ENCODE measurements at regions of chr3 and their contacts with region 1.

Region 1: DNA sequence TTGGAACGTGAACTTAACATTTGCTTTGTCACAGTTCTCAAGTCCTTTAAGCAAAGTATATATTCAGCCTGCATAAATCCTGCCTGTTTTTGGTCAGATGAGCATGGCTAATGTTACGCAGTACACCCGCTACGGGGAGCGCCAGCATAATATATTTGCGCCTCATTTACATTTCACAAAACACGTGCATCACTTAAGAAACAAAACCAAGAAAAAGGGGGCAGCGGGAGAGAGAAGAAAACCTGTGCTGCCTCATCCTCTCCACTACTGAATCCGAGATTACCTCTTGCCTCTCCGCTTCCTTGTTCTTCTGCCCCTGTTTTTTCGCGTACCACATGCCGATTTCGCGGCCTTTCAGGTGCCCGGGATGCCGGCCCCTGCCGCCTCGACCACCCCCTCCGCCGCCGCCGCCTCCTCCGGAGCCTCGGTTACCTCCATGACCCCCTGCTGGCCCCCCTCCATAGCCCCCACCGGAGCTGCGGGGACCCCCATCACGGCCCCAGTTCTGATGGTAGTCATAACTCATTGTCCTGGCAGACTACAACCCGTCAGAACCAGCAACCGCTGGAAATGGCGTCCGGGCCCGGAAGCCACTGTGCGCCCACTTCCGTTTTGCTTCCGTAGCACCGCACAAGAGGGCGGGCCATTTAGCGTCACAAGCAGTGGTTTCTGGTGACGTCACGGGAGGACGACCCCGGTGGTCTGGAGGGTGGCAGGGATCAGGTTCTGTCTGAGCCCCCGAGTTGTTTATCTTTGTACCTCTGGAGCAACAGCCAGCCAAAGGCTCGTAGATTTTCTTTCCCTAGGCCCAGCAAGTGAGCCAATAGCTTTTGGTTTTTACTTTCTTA is at the start of gene DHX36:
- DNase-seq: peak; percentile 84 to 91
- H3K4me3 ChIP-seq: peak within 1 kb of the TSS; percentile 88
- H3K4me1 ChIP-seq: peaks cover 11% of the 10 kb centered on the region
- H3K27me3 ChIP-seq: no peaks in the 10 kb centered on the region

Region 2: GRCh38 chr3:154684021-154684420 is 359.9 kb after region 1 on chr3:
- in situ Hi-C with region 1: no loop called
- DNase-seq: peak in 1 of 2 experiments; percentile 26
- H3K4me3 ChIP-seq: no peak overlapping the region
- H3K4me1 ChIP-seq: no peaks in the 10 kb centered on the region
- H3K27me3 ChIP-seq: no peaks in the 10 kb centered on the region

Region 3: DNA sequence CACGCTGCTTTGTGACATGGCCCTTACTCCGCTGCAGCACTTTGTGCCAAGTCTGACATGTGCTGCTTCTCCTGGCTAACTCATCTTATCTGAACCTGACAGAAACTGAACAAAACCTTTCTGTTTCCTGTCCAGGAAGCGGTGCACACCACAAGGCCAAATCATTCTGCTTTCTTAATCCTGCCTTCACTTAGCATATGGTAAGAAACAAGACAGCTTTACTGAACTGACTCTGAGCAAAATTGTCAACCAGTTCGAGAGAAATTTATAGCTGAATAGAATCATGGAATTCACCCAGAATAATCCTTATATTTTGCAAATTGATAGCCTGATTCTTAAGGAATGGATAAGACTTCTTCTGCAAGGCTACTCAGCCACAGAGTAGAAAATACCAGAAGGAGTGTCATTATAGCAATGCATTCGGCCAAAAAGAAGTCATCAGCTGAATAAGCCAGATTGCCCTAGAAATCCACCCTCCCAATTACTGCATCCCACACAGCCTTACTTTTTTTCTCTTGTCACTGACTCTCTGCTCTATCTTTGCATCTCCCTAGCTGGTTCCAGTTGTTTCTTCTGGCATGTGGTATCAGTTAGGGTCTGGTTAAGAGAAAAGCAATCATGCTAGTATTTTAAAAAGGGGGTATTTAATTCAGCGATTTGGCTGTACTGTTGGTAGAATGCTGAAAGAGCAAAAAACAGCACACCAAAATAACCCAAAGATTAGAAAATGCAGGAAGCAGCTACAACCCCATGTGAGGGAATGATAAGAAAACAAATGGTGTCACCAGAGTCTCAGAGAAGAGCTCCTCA is 1011.0 kb after region 1 on chr3:
- in situ Hi-C with region 1: loop called (anchors 25 kb)
- DNase-seq: no peak
- H3K4me3 ChIP-seq: no peak overlapping the region
- H3K4me1 ChIP-seq: peaks cover 3% of the 10 kb centered on the region
- H3K27me3 ChIP-seq: no peaks in the 10 kb centered on the region